ENCODE measurements at regions of chr5 and their contacts with region 1.

Region 1: GRCh38 chr5:54087436-54087835 is 222.9 kb downstream of the ARL15 start:
- DNase-seq: peak; percentile 41
- H3K4me3 ChIP-seq: no peak overlapping the region
- H3K27ac ChIP-seq: no peak overlapping the region
- H3K4me1 ChIP-seq: peaks cover 31% of the 10 kb centered on the region
- H3K27me3 ChIP-seq: no peaks in the 10 kb centered on the region
- CTCF ChIP-seq: no peak

Region 2: GRCh38 chr5:54135042-54135441 is 47.6 kb after region 1 on chr5:
- CTCF ChIA-PET with region 1: no interaction called
- dilution Hi-C with region 1: loop called (anchors 5 kb)
- in situ Hi-C with region 1: no loop called
- intact Hi-C with region 1: no loop called
- DNase-seq: peak; percentile 37
- H3K4me3 ChIP-seq: no peak overlapping the region
- H3K27ac ChIP-seq: no peak overlapping the region
- H3K4me1 ChIP-seq: peaks cover 5% of the 10 kb centered on the region
- H3K27me3 ChIP-seq: no peaks in the 10 kb centered on the region
- CTCF ChIP-seq: peak in 1 of 2 donors; percentile 5

Region 3: DNA sequence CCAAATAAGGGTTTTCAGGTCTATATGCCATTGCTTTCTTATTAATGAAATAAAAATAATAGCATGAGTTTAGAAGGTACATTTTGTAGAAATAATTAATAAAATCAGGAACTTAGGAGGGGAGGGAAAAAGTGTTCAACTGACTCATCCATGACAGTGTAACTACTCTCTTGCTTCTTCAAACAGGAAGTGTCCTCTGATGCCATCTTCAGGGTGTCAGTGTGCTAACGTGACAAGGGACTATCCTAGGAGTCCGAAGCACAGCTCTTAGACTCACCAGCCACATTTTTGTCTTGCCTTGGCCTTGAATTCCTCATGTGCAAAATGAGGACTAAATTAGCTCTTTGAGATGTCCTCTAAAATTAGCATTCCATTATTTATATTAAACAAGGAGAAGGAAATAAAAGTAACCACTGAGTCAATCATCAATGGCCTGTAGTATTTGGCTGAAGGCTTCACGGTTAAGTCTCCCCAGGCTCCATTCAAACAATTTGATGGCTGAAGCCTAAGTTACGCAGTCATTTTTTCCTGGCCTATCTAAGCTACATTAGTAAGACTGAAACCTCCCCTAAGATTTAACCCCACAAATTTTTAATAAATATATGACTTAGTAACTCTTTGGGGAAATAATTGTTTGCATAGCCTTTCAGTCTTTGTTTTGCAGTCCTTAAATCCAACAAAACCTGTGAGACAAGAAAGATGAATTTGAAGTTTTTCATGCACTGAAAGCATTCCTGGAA is 71.9 kb after region 1 on chr5:
- CTCF ChIA-PET with region 1: no interaction called
- dilution Hi-C with region 1: no loop called
- in situ Hi-C with region 1: no loop called
- intact Hi-C with region 1: no loop called
- DNase-seq: peak; percentile 10
- H3K4me3 ChIP-seq: no peak overlapping the region
- H3K27ac ChIP-seq: no peak overlapping the region
- H3K4me1 ChIP-seq: no peaks in the 10 kb centered on the region
- H3K27me3 ChIP-seq: no peaks in the 10 kb centered on the region
- CTCF ChIP-seq: peak; percentile 2 to 32